ENCODE measurements at regions of chr6 and their contacts with region 1.

Region 1: GRCh38 chr6:47298475-47298874 is 11.2 kb downstream of the TNFRSF21 start:
- DNase-seq: no peak
- H3K4me3 ChIP-seq: no peak overlapping the region
- H3K27ac ChIP-seq: no peak overlapping the region
- H3K4me1 ChIP-seq: peaks cover 0 to 21% (median 13%) of the 10 kb centered on the region in 4 donors
- H3K27me3 ChIP-seq: no peaks in the 10 kb centered on the region
- CTCF ChIP-seq: no peak
- EP300 ChIP-seq: no peak
- POLR2A ChIP-seq: no peak

Region 2: DNA sequence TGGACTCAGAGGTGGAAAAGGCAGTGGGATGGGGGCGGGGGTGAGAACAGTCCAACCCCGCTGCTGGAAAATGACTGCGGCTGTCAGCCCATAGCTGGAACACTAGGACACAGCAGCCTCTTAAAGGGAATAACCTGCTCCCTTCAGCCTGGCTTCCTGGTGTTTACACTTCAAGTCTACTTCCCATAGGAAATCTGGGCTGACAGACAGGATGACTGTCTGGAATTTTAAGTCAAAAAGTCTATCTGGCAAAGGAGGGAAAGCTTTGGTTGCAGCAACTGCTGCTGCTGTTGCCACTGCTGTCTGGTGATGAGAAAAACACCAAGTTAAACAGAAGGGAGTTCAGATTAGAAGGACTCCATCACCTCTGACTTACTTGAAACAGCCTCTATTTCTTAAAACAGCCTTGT is 33.7 kb before region 1 on chr6:
- intact Hi-C with region 1: loop called (anchors 5 kb)
- DNase-seq: no peak
- H3K4me3 ChIP-seq: no peak overlapping the region
- H3K27ac ChIP-seq: peak overlapping the region in 1 of 4 donors; percentile 21
- H3K4me1 ChIP-seq: peaks cover 0 to 14% (median 6%) of the 10 kb centered on the region in 4 donors
- H3K27me3 ChIP-seq: no peaks in the 10 kb centered on the region
- CTCF ChIP-seq: no peak
- EP300 ChIP-seq: no peak
- POLR2A ChIP-seq: no peak

Measured in sigmoid colon (tissue), 7 donors.